Activated CD4-positive, alpha-beta T cell treated with anti-CD3 and anti-CD28 coated beads, Interleukin-2, amount 10 ng/mL, durations not matched to agents 24 days and 14 days (primary cell): ENCODE measurements at regions of chr14 and their contacts with region 1.

Region 1: DNA sequence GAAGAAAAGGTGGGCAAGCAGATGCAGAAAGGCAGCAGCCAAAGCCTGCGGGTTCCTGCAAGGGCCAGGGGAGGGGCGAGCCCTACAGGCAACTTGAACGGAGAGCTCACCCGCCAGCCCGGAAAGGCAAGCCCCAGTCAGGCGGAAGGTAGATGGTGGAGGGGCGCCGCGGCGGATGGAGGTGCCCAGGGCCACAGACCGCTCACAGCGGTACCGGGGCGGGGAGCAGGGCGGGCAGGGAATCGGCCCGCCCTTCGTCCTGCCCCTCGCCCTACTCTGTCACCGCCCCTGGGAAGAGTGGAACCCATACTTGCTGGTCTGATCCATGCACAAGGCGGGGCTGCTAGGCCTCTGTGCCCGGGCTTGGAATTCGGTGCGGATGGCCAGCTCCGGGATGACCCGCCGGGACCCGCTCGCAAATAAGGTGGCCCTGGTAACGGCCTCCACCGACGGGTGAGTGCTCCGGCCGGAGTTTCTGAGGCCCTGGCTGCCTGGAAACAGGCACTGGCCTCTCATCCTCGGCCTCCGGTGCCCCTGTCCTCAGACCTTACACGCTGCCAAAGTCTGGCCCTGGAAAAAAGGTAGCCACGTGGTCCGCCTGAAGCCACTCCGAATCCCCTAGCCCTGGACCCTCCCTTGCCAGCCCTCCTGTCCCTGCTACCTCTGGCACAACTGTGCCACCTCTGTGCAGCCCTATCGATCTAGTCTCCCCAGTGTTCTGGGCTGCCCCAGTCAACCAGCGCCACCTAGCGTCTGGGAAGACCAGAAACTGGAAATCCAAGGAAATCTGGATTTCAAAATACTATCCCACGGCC is at the start of gene DHRS4:
- DNase-seq: peak; percentile 93
- H3K4me3 Mint-ChIP-seq: peak within 1 kb of the TSS; percentile 99
- H3K27ac Mint-ChIP-seq: peak within 1 kb of the TSS; percentile 90
- H3K4me1 Mint-ChIP-seq: peaks cover 15% of the 10 kb centered on the region
- H3K27me3 Mint-ChIP-seq: no peaks in the 10 kb centered on the region
- total RNA-seq, gene DHRS4: 17.6 and 18.2 TPM in 2 replicates

Region 2: GRCh38 chr14:23665375-23666192 is 288.1 kb before region 1 on chr14:
- intact Hi-C with region 1: loop called (anchors 1 kb)
- DNase-seq: peak; percentile 71
- H3K4me3 Mint-ChIP-seq: no peak overlapping the region
- H3K27ac Mint-ChIP-seq: no peak overlapping the region
- H3K4me1 Mint-ChIP-seq: no peaks in the 10 kb centered on the region
- H3K27me3 Mint-ChIP-seq: peaks cover 3% of the 10 kb centered on the region

Region 3: DNA sequence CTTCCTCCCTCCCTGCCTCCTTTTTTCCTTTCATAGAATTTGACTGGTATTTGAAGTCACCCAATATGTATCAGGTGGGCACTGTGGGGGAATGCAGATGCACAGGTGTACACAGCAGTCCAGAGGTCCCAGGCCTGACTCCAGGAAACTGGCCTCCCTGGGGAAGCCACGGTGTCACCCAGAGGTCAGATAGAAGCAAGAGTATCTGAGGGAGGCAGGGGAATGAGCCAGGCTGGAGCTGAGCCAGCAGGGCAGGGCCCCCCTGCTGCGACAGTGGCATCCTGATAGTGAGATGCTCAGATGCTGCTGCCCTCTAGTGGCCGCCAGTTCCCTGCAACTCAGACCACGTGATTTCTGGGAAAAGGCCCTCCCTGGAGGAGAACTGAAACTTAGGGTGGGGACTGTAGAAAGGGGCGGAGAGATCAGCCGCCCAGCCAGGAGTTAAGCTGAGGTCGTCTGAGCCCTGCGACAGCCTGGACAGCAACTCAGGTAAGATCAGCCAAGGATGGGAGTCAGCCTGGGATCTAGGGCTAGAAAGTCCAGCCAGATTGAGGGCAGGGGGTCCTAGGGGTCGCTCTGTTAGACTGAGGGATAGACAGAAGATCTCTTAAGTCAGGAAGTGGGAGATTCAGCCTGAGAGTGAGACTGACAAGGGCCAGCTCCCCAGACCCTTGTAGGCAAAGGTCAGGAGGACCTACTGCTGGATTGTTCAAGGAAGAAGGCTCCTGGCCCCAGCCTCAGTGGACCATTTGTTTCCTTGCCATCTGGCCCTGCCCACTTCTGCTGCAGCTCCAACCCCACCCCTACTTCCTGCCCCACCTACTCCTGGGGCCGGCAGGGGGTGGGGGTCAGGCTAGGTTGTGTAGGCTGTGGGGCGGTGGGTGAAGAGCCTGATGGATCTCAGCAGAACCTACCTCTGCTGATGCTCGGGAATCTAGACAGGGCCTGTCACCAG is 207.5 kb after region 1 on chr14 and contains the start of gene IRF9:
- intact Hi-C with region 1: no loop called
- DNase-seq: peak; percentile 100
- H3K4me3 Mint-ChIP-seq: peak within 1 kb of the TSS; percentile 93
- H3K27ac Mint-ChIP-seq: peak within 1 kb of the TSS; percentile 97
- H3K4me1 Mint-ChIP-seq: peaks cover 51% of the 10 kb centered on the region
- H3K27me3 Mint-ChIP-seq: peaks cover 2% of the 10 kb centered on the region
- total RNA-seq, gene IRF9: 138 and 159 TPM in 2 replicates